Mucosa of descending colon (tissue), 3 donors: ENCODE measurements at regions of chr11 and their contacts with region 1.

Region 1: DNA sequence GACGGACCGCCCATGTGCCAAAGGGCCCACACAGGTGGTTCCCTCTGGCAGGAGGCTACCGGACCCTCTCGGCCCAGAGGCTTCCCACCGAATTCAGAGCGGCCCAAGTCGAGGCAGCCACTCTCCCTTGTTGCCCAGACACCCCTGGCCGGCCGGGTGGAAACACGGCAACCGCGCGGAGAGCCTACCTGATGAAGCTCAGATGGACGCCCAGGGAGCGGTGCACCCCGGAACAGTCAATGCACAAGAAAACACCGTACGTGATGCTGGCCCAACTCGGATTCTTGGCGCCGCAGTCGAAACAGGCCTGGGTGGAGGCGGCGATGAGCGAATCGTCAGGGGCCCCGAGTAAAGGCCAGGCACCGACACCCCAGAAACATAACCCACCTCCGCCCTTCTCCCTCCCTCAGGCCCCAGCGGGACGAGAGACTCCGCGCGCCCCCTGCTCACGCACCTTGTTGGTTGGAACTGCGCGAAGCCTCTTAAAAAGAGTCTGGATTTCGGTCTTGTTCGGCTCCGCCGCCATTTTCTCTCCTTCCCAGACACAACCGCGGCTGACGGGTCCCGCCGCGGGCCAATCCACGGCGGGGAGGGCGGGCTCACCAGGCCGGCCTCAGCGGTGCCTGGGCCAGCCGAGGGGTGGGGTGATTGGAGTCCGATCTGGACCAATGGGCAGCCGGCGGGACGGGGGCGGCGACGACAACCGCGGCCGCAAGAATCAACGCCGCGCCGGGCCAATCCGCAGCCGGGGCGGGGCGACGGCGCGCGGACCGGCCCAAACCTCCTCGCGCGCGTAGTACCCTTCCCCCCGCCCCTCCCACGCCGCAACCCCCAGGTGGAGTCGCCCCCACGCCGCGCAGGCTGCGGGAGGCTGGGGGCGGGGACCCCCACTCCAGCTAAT is at the start of gene ARFGAP2:
- DNase-seq: peak; percentile 97 to 98 (median 98)
- ATAC-seq: peak; percentile 96
- H3K4me3 ChIP-seq: peak within 1 kb of the TSS; percentile 99
- H3K4me1 ChIP-seq: peaks cover 19% of the 10 kb centered on the region
- CTCF ChIP-seq: no peak
- total RNA-seq, gene ARFGAP2: 83.7 to 107 (median 106) TPM

Region 2: DNA sequence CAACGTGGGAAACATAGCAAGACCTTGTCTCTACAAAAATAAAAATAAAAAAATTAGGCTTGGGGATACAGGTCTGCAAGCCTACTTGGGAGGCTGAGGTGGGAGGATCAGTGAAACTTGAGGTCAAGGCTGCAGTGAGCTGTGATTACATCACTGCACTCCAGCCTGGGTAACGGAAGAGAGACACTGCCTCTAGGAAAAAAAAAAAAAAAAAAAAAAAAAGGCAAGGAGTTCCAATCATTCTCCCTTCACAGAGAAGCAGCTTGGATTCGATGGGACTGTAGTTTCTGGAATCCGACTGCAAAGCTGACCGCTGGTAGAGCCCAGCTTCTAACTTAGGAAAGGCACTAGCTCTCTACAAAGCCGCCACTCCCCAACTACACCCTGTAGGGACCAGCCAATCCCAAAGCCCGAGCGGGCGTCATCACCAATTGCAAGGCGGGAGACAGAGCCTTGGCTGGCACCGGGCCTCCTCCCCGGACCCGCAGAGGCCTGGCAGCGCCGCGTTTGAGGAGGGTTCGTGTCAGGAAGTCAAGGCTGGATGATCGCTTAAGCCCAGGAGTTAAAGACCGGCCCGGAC is 37.5 kb after region 1 on chr11:
- intact Hi-C with region 1: no loop called
- DNase-seq: peak; percentile 93 to 96 (median 94)
- ATAC-seq: peak; percentile 87
- H3K4me3 ChIP-seq: peak overlapping the region; percentile 46
- H3K4me1 ChIP-seq: peaks cover 17% of the 10 kb centered on the region
- CTCF ChIP-seq: no peak

Region 3: DNA sequence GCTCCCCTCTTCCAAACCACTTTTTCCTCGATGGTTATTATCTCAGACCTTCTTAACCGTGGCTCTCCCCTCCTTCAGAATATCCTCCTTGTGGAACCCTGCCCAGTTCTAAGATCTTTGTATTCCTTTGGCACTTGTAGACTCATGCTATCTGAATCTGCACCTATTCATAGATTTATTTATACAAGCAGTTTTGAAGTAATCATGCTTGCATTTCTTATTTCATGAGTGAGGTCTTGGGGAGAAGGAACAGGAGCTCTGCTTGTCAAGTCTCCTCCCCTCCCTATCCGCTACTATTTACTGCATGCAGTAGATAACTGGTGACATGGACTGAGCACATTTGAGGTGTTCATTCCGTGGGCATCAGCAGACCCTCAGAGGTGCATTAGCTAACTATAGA is 87.9 kb after region 1 on chr11:
- intact Hi-C with region 1: loop called in 1 of 2 experiments (anchors 5 kb)
- DNase-seq: no peak
- ATAC-seq: no peak
- H3K4me3 ChIP-seq: no peak overlapping the region
- H3K4me1 ChIP-seq: peaks cover 18% of the 10 kb centered on the region
- CTCF ChIP-seq: no peak

Region 4: DNA sequence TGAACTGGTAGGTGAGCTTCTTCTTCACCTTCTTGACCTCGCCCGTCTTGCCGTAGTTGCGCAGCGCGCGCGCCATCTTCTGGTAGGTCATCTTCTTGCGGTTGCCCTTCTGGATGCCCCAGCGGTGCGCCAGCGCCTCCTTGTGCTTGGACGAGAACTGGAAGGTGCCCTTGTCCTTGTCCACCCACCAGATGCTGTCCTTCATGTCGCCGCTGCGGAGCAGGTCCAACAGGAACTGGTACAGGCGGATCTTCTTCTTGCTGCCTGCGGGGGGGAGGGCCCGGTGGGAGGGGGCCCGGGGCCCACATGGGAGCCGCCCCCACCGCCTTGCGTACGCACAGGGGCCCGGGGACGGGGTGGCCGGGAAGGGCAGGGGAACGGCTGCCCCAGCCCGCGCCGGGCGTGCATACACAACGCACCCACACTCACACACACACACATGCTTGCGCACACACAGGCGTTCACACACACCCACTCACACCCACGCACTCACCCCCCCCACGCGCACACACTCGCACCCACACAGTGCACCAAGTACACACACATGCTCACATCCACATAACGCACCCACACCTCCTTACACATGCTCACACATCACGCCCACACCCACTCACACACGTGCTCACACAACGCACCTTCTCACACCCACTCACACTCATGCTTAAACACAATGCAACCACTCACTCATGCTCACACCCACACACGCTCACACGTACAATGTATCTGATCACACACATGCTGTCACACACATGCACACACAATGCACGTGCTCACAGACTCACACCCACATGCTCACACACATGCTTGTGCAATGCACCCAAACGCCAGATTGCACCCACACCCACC is 178.9 kb after region 1 on chr11:
- intact Hi-C with region 1: loop called in 1 of 2 experiments (anchors 10 kb)
- DNase-seq: peak; percentile 94 to 100 (median 99)
- ATAC-seq: peak; percentile 98
- H3K4me3 ChIP-seq: no peak overlapping the region
- H3K4me1 ChIP-seq: no peaks in the 10 kb centered on the region
- CTCF ChIP-seq: peak; percentile 89